ENCODE measurements at regions of chr2 and their contacts with region 1.

Region 1: DNA sequence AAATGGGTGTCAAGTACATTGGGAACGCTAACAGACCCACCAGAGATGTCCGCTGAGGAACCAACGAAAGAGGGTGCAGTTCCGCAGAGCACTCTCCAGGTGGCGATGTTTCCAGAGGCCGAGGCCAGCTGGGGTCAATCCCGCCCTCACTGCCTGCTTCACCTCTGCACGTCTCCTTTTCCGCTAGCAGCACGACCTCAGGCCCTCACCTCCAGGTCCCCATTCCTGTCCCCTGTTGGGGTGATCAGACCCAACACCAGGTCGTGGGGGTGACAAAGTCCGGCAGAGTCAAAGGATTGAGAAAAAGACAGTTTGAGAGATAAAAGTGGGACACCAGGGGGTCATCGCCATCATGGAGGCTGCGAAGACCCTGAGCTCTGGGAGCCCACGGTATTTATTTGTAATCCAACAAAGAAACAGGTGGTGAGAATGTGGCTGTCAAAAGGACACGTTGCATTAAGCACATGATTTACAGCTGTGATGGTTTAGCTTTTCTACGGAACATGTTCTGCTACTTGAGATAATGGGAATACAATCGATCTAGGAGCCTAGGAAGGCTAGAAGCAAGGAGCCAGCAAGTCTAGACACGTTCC is 27.3 kb downstream of the ZAP70 start:
- DNase-seq: peak in 5 of 9 donors; percentile 13 to 33 (median 30)
- ATAC-seq: peak; percentile 63
- H3K4me3 ChIP-seq: no peak overlapping the region
- H3K4me3 Mint-ChIP-seq: no peak overlapping the region
- H3K27ac ChIP-seq: no peak overlapping the region
- H3K27ac Mint-ChIP-seq: peak overlapping the region in 8 of 9 donors; percentile 54 to 86 (median 78)
- H3K4me1 ChIP-seq: peaks cover 15 to 55% of the 10 kb centered on the region in 2 donors
- H3K4me1 Mint-ChIP-seq: peaks cover 44 to 66% (median 55%) of the 10 kb centered on the region in 7 donors
- H3K27me3 ChIP-seq: no peaks in the 10 kb centered on the region
- H3K27me3 Mint-ChIP-seq: no peaks in the 10 kb centered on the region

Region 2: DNA sequence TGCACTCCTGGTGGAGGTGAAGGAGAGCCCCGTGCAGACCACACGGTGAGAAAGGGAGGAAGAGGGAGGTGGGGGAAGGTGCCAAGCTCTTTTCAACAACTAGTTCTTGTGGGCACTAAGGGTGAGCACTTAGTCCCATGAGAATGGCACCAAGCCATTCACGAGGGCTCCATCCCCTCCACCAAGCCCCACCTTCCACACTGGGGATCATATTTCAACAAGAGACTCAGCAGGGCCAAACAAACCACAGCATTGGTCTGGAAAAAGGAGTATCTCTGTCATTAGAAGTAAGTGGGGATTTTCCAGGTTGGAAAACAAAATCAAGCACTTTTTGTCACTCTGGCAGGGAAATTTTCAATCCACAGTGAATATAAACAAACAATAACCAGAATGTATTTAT is 11.1 kb after region 1 on chr2:
- CTCF ChIA-PET with region 1: interaction called, 10 read pairs
- POLR2A ChIA-PET with region 1: interaction called, 3 read pairs
- intact Hi-C with region 1: no loop called
- DNase-seq: no peak
- ATAC-seq: no peak
- H3K4me3 ChIP-seq: no peak overlapping the region
- H3K4me3 Mint-ChIP-seq: no peak overlapping the region
- H3K27ac ChIP-seq: no peak overlapping the region
- H3K27ac Mint-ChIP-seq: peak overlapping the region in 2 of 9 donors; percentile 3 to 33
- H3K4me1 ChIP-seq: peaks cover 10 to 18% of the 10 kb centered on the region in 2 donors
- H3K4me1 Mint-ChIP-seq: peaks cover 14 to 29% (median 22%) of the 10 kb centered on the region in 7 donors
- H3K27me3 ChIP-seq: no peaks in the 10 kb centered on the region
- H3K27me3 Mint-ChIP-seq: no peaks in the 10 kb centered on the region

Region 3: DNA sequence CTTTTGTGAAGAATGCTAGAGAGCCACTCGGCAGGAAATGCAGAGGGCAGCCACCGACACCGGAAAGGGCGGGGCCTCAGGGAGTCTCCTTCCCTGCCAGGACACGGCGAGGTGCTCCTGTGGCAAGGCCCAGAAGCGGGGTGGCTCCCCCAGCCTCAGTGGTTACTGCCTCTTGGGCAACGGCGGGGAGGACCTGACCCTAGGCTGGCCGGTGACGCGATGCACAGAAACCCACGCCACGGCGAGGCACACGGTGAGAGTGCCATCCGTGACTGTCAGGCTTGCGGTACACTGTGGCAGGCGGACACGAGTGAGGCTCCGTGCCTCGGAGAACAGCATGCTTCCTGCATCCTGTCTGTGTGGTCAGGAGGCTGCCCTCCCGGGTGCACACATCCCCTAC is 20.5 kb after region 1 on chr2:
- CTCF ChIA-PET with region 1: no interaction called
- POLR2A ChIA-PET with region 1: interaction called, 3 read pairs
- intact Hi-C with region 1: loop called in 1 of 2 experiments (anchors 2 kb)
- DNase-seq: peak in 8 of 9 donors; percentile 18 to 61 (median 41)
- ATAC-seq: peak; percentile 72
- H3K4me3 ChIP-seq: peak overlapping the region; percentile 10
- H3K4me3 Mint-ChIP-seq: peak overlapping the region; percentile 2 to 74 (median 70)
- H3K27ac ChIP-seq: peak overlapping the region; percentile 56
- H3K27ac Mint-ChIP-seq: peak overlapping the region; percentile 63 to 90 (median 88)
- H3K4me1 ChIP-seq: peaks cover 12 to 23% of the 10 kb centered on the region in 2 donors
- H3K4me1 Mint-ChIP-seq: peaks cover 16 to 55% (median 35%) of the 10 kb centered on the region in 7 donors
- H3K27me3 ChIP-seq: no peaks in the 10 kb centered on the region
- H3K27me3 Mint-ChIP-seq: no peaks in the 10 kb centered on the region

Measured in naive thymus-derived CD4-positive, alpha-beta T cell (primary cell).